ENCODE measurements at regions of chr5 and their contacts with region 1.

Region 1: GRCh38 chr5:133051580-133052332 is at the start of gene HSPA4:
- DNase-seq: peak; percentile 99
- H3K4me3 ChIP-seq: peak within 1 kb of the TSS; percentile 87 to 96 (median 94)
- H3K27ac ChIP-seq: peak within 1 kb of the TSS; percentile 96 to 100 (median 98)
- H3K4me1 ChIP-seq: peaks cover 0 to 49% (median 43%) of the 10 kb centered on the region in 4 donors
- H3K27me3 ChIP-seq: no peaks in the 10 kb centered on the region
- CTCF ChIP-seq: no peak
- EP300 ChIP-seq: peak in 1 of 4 donors; percentile 70
- POLR2A ChIP-seq: peak; percentile 89
- total RNA-seq, gene HSPA4: 40.3 to 54.0 (median 45.3) TPM

Region 2: DNA sequence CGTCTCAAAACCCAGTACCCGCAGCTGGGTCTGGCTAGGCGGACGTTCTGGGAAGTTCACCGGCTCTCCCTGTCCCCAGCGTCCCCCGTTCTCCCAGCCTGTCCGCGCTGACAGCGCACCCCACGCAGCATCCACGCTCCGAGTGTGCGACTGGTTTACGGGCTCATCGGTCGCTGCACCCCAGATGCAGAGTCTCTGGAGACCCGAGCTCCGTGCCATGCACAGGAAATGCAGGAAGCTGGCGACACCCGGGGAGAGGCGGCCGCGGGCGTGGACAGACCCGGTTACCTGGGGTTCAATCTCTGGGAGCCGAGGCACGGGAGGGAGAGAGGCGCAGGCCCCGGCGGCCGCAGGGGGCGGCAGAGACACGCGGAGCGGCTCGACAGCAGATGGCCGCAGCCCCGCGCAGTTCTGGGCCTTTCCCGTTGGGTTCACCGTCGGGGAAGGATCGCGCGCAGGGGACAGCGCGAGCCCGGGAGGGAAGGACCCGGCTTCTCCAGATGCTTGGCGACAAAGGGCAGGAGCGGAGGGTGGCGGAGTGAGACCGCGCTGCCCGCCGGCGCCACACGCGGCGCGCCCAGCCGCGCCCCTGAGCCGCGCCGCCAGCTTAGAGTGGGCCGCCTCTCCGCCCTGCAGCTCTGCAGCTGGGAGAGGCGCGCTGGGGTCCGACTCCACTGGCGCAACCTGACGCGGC is 221.9 kb before region 1 on chr5:
- intact Hi-C with region 1: loop called (anchors 5 kb)
- DNase-seq: peak; percentile 85
- H3K4me3 ChIP-seq: peak overlapping the region; percentile 39 to 76 (median 60)
- H3K27ac ChIP-seq: peak overlapping the region; percentile 66 to 81 (median 74)
- H3K4me1 ChIP-seq: peaks cover 0 to 13% (median 11%) of the 10 kb centered on the region in 4 donors
- H3K27me3 ChIP-seq: peaks cover 0 to 16% (median 12%) of the 10 kb centered on the region in 3 donors
- CTCF ChIP-seq: peak; percentile 69 to 93 (median 82)
- EP300 ChIP-seq: no peak
- POLR2A ChIP-seq: no peak

Region 3: DNA sequence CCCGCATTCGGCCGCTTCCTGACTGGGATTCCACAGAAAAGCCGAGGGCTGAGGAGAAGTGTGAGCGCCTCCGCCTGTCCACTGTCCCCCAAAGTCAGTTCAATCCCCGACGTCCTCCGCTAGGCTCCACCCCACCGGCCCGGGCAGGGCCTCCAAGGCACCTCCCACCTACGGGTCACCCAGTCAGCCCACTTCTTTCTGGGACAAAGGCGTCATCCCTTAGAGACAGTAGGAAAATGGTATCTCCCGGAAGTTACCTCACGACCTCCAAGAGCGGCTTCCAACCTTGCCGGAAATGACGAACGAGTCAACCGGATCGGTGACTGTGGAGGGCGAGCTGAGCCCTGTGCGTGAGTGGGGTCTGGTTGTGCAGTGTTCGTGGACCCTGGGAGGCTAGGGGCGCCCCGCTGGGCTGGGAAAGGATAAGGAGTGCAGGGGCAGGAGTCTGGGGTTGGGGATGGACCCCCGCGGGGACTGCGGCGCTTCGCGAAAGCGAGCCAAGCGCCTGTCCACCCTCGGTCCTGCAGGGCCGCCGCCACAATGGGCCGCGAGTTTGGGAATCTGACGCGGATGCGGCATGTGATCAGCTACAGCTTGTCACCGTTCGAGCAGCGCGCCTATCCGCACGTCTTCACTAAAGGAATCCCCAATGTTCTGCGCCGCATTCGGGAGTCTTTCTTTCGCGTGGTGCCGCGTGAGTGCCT is 185.3 kb before region 1 on chr5 and contains the starts of genes GDF9 and UQCRQ:
- intact Hi-C with region 1: loop called (anchors 10 kb)
- DNase-seq: peak; percentile 98
- H3K4me3 ChIP-seq: peak within 1 kb of the TSS; percentile 68 to 80 (median 78)
- H3K27ac ChIP-seq: peak within 1 kb of the TSS; percentile 90 to 93 (median 92)
- H3K4me1 ChIP-seq: peaks cover 0 to 22% (median 20%) of the 10 kb centered on the region in 4 donors
- H3K27me3 ChIP-seq: no peaks in the 10 kb centered on the region
- CTCF ChIP-seq: no peak
- EP300 ChIP-seq: peak in 1 of 4 donors; percentile 60
- POLR2A ChIP-seq: peak; percentile 92 to 95
- total RNA-seq, gene GDF9: 0.33 to 1.8 (median 0.55) TPM in 3 of 4 donors, not detected in the other
- total RNA-seq, gene UQCRQ: 113 to 230 (median 172) TPM

Region 4: DNA sequence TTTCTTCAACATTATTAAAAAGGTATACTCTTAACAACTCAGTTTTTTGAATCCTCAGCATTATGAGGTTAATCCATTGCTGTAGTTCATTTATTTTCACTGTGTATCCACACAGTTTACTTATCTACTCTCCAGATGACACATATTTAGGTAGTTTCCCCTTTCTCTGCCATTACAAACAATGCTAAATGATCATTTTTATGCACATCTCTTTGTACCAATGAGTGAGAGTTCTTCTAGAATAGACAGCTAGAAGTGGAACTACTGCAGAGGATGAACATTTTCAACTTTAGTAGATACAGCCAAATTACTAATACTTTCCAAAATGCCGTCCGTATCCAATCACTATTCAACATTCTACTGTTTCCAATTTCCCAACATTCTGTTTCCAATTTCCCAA is 99.9 kb before region 1 on chr5:
- intact Hi-C with region 1: no loop called
- DNase-seq: no peak
- H3K4me3 ChIP-seq: no peak overlapping the region
- H3K27ac ChIP-seq: no peak overlapping the region
- H3K4me1 ChIP-seq: peaks cover 0 to 68% (median 42%) of the 10 kb centered on the region in 4 donors
- H3K27me3 ChIP-seq: no peaks in the 10 kb centered on the region
- CTCF ChIP-seq: no peak
- EP300 ChIP-seq: no peak
- POLR2A ChIP-seq: no peak

Region 5: GRCh38 chr5:132963175-132964104 is 88.3 kb before region 1 on chr5 and contains the start of gene AFF4:
- intact Hi-C with region 1: loop called (anchors 1 kb)
- DNase-seq: peak; percentile 98
- H3K4me3 ChIP-seq: peak within 1 kb of the TSS; percentile 82 to 100 (median 100)
- H3K27ac ChIP-seq: peak within 1 kb of the TSS; percentile 95 to 100 (median 100)
- H3K4me1 ChIP-seq: peaks cover 0 to 41% (median 27%) of the 10 kb centered on the region in 4 donors
- H3K27me3 ChIP-seq: no peaks in the 10 kb centered on the region
- CTCF ChIP-seq: no peak
- EP300 ChIP-seq: peak in 2 of 4 donors; percentile 71 to 73
- POLR2A ChIP-seq: peak; percentile 95 to 96
- total RNA-seq, gene AFF4: 52.4 to 74.0 (median 66.7) TPM

Region 6: GRCh38 chr5:133025804-133026663 is 25.7 kb before region 1 on chr5 and contains the start of gene ZCCHC10:
- intact Hi-C with region 1: loop called (anchors 1 kb)
- DNase-seq: peak; percentile 96
- H3K4me3 ChIP-seq: peak within 1 kb of the TSS; percentile 79 to 95 (median 85)
- H3K27ac ChIP-seq: peak within 1 kb of the TSS; percentile 90 to 98 (median 97)
- H3K4me1 ChIP-seq: peaks cover 0 to 22% (median 11%) of the 10 kb centered on the region in 4 donors
- H3K27me3 ChIP-seq: no peaks in the 10 kb centered on the region
- CTCF ChIP-seq: no peak
- EP300 ChIP-seq: no peak
- POLR2A ChIP-seq: peak; percentile 32 to 59
- total RNA-seq, gene ZCCHC10: 15.0 to 18.9 (median 17.0) TPM

Region 7: DNA sequence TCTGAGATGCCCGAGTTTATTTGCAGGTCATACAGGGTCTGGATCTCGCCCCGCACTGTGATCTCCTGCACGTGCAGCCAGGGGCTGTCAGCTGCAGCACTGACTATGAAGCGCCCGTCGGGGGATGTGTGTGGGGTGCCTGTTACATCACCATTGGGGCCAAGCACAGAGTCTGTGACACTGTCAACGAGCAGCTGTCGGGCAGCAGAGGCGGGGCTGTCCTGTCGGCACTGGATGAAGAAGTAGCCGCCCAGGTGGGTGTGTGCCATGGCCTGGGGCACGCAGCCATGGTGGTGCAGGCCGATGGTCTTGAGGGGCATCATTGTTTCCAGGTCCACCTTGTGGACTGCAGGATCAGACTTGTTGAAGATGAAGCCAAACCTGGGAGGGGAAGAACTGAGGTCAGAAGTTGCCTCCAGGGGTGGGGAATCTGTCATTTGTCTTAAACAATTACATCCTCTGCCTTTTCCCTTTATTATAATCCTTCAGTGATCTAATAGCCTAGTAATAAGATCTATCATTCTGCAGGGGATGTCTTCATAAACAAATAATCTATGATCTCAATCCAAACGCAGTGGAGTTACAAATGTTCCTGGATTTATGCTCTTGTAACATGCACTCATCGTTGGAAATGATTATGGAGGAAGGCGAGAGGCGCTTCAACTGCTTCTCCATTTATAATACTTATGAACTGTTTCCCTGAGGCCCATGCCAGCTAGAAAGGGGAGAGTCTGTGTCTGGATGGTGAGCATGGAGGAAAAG is 147.8 kb after region 1 on chr5:
- intact Hi-C with region 1: no loop called
- DNase-seq: no peak
- H3K4me3 ChIP-seq: no peak overlapping the region
- H3K27ac ChIP-seq: no peak overlapping the region
- H3K4me1 ChIP-seq: no peaks in the 10 kb centered on the region
- H3K27me3 ChIP-seq: peaks cover 0 to 16% (median 0%) of the 10 kb centered on the region in 3 donors
- CTCF ChIP-seq: no peak
- EP300 ChIP-seq: no peak
- POLR2A ChIP-seq: no peak

Region 8: DNA sequence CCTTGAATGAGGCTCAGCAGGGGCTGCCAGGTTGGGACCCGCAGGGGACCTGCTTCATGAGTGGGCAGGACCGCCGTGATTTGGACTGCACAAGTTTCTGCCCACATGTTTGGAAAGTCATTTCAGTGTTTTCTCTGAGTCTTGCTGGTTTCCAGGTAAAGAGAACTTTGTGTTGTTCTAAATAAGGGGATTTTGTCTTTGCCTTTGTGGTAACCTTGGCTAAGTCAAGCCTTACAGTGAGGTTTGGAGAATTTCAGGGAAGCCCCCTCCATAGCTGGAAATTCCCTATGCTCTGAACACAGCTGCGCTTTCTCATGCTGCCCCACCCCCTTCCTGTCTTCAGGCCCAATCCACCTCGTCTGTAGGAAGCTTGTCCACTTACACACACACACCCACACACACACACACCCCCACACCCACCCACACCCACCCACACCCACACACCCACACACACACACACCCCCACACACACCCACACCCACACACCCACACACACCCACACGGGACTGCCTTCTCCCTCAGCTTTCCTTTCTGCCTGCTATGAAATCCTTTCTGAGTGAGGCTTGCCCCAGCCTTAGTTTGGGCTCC is 270.2 kb after region 1 on chr5:
- intact Hi-C with region 1: no loop called
- DNase-seq: no peak
- H3K4me3 ChIP-seq: no peak overlapping the region
- H3K27ac ChIP-seq: no peak overlapping the region
- H3K4me1 ChIP-seq: no peaks in the 10 kb centered on the region
- H3K27me3 ChIP-seq: no peaks in the 10 kb centered on the region
- CTCF ChIP-seq: no peak
- EP300 ChIP-seq: no peak
- POLR2A ChIP-seq: no peak

Measured in sigmoid colon (tissue), 7 donors.